A549 (cell line): ENCODE measurements at regions of chr3 and their contacts with region 1.

Region 1: DNA sequence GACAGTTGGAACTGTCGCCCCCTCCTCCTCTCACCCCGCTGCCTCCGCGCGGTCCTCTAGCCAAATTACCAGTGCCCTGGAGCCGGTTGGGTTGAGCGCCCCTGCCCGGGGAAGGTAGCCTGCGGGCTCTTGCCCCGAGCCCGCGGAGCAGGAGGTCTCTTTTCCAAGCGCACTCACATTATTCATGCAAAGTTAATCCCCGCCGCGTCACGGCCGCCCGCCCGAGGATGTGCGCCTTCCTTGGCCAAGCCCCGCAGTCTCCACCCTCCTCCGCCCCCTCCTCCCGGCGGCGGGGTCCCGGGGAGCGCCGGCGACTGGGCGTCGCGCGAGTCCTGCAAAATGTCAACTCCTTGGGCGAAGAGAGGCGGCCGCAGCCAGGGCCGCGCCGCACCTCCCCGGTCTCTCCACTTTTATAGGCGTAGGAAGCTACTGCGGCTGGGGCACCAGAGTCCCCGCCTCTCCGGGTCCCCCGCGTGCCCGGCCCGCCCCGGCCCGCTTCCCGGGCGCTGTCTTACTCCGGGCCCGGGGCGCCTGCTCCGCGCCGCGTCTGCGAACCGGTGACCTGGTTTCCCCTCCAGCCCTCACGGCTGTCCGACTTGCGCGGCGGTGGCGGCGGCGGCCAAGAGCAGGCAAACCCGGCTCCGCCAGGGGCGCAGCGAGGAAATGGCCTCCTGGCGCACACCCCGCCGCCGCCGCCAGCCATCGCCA is at the start of gene THRB:
- DNase-seq: peak; percentile 68 to 70
- ATAC-seq: peak; percentile 79 to 90
- H3K4me3 ChIP-seq: peak within 1 kb of the TSS; percentile 93
- H3K27ac ChIP-seq: peak within 1 kb of the TSS; percentile 88 to 92
- H3K4me1 ChIP-seq: peaks cover 32% of the 10 kb centered on the region
- CTCF ChIP-seq: peak; percentile 22
- EP300 ChIP-seq: no peak
- POLR2A ChIP-seq: no peak
- RAD21 ChIP-seq: peak in 1 of 2 experiments; percentile 14; a peak in 1 of 5 replicates
- polyA plus RNA-seq, gene THRB: 2.0 and 2.6 TPM in 2 replicates

Region 2: GRCh38 chr3:24264748-24265158 is 230.0 kb before region 1 on chr3:
- CTCF ChIA-PET with region 1: interaction called, 17 read pairs
- POLR2A ChIA-PET with region 1: no interaction called
- DNase-seq: peak; percentile 49 to 53
- ATAC-seq: peak; percentile 64 to 78; a peak in 4 of 6 replicates
- H3K4me3 ChIP-seq: no peak overlapping the region
- H3K27ac ChIP-seq: no peak overlapping the region
- H3K4me1 ChIP-seq: no peaks in the 10 kb centered on the region
- CTCF ChIP-seq: peak; percentile 80
- EP300 ChIP-seq: no peak
- POLR2A ChIP-seq: no peak
- RAD21 ChIP-seq: peak; percentile 79 to 84

Region 3: DNA sequence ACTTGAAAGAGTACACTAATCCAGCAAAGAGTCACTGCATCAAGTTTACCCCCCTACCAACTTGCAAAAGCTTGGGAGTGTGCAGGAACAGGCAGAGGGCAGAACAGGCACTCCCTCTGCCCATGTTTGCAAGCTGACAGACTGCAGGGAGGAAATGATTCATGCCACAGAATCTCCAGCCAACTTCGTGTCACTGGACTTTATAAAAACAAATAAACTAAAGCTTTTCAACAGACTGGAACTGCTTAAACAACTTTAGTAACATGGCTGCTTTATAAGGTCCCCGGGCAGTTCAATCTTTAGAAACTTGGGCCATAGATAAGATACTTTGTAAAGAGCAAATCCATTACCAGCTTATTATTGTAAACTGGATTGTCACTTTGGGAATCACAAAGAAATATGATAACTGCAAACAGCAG is 129.6 kb before region 1 on chr3:
- CTCF ChIA-PET with region 1: interaction called, 13 read pairs
- POLR2A ChIA-PET with region 1: no interaction called
- DNase-seq: peak; percentile 29 to 84
- ATAC-seq: peak; percentile 99
- H3K4me3 ChIP-seq: no peak overlapping the region
- H3K27ac ChIP-seq: peak overlapping the region; percentile 48 to 70; a peak in 5 of 6 replicates
- H3K4me1 ChIP-seq: peaks cover 35% of the 10 kb centered on the region
- CTCF ChIP-seq: peak; percentile 22; the same call in 1 of the 3 replicates
- EP300 ChIP-seq: 0 out of 5 replicates have a peak, but pooled peaks of 1 of the 2 experiments have one; percentile 36
- POLR2A ChIP-seq: no peak
- RAD21 ChIP-seq: peak; percentile 37 to 68; a peak in 2 of 5 replicates

Region 4: GRCh38 chr3:24483873-24484272 is 10.9 kb before region 1 on chr3:
- CTCF ChIA-PET with region 1: interaction called, 11 read pairs
- POLR2A ChIA-PET with region 1: no interaction called
- DNase-seq: no peak
- ATAC-seq: no peak
- H3K4me3 ChIP-seq: no peak overlapping the region
- H3K27ac ChIP-seq: no peak overlapping the region
- H3K4me1 ChIP-seq: 0 out of 3 replicates have a peak, but pooled peaks cover 8% of the 10 kb centered on the region
- CTCF ChIP-seq: no peak
- EP300 ChIP-seq: no peak
- POLR2A ChIP-seq: no peak
- RAD21 ChIP-seq: no peak